Caco-2 (cell line): ENCODE measurements at regions of chr10 and their contacts with region 1.

Region 1: DNA sequence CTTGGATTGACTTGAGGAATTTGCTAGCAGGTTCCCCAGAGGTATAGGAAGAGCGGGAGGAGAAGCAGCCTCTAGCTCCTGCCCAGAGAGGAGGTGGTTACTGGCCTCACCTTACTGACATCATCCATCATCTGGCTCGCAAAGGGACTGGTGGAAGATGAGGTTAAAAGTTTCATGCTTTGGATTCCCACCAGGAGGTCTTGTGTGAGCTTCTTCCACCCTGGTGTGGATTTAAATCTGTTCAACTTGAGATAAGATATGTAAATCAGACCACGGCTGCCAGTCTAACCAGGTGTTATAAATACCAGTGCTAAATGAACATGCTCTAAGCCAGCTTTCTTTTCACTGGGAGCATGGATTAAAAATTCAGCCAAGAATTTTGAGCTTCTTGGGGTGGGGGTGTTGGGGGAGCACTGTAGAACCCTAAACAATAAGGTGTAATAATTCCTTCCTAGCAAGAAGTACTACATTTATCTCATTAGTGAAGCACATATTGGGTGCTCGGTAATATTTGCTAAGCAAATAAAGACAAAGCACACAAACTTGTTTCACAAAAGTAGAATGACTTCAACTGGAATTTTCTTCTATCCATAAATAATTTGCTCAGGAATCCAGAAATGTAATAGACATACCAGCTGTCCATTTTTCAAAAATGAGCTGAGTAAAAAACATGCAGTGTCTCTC is 7.8 kb downstream of the PROSER2 start:
- DNase-seq: peak; percentile 83 to 89
- H3K4me3 ChIP-seq: no peak overlapping the region
- H3K4me3 Mint-ChIP-seq: peak overlapping the region; percentile 71
- H3K27ac Mint-ChIP-seq: peak overlapping the region; percentile 91
- H3K4me1 ChIP-seq: peaks cover 69% of the 10 kb centered on the region
- H3K4me1 Mint-ChIP-seq: peaks cover 46% of the 10 kb centered on the region
- H3K27me3 ChIP-seq: no peaks in the 10 kb centered on the region
- H3K27me3 Mint-ChIP-seq: no peaks in the 10 kb centered on the region
- CTCF ChIP-seq: no peak

Region 2: DNA sequence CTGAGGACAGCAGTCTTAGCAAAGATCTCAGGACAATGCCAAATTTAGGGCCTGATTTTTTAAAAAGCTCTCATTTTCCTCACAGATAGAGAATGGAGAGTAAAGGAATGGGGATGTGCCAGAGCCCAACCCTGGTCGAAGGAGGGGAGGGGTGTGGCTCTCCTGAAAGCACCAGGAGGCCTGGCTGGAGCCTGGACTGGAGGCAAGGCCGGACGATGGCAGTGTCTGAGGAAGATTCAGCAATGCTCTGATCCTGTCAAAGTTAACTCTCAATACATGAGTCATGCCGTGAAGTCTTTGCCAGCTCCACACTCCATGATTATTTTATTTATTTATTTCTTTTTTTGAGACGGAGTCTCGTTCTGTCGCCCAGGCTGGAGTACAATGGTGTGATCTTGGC is 103.3 kb after region 1 on chr10:
- CTCF ChIA-PET with region 1: no interaction called
- POLR2A ChIA-PET with region 1: no interaction called
- intact Hi-C with region 1: loop called (anchors 5 kb)
- DNase-seq: no peak
- H3K4me3 ChIP-seq: no peak overlapping the region
- H3K4me3 Mint-ChIP-seq: no peak overlapping the region
- H3K27ac Mint-ChIP-seq: peak overlapping the region; percentile 10
- H3K4me1 ChIP-seq: peaks cover 19% of the 10 kb centered on the region
- H3K4me1 Mint-ChIP-seq: peaks cover 28% of the 10 kb centered on the region
- H3K27me3 ChIP-seq: no peaks in the 10 kb centered on the region
- H3K27me3 Mint-ChIP-seq: no peaks in the 10 kb centered on the region
- CTCF ChIP-seq: no peak